AG04449 (cell line): ENCODE measurements at regions of chr1 and their contacts with region 1.

Region 1: DNA sequence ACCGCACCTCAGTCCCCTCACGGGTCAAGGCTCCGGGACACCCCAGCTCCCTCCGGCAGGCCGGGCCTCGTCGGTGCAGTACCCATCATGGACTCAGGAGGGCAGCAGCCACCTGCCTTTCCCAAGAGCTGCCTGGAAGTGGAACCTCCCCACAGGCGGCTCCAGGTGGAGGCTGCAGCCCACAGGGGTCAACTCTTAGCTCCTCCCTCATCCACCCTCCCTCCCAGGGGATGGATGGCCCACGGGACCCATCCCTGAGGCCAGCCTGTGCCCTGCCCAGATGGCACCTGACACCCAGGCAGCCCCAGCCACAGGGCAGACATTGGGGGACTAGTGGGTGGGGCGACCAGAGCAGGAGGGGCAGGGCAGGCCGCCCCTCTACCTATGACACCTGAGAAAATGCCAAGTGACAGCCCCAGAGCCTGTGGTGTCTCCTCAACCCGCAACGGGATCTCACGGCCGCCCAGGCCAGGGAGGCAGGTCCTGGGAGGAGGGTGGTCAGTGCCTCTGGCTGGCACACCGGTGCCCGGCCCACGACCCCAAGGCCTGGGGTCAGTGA is 1.2 kb upstream of the ARHGEF16 start:
- DNase-seq: no peak
- H3K4me3 ChIP-seq: no peak overlapping the region
- CTCF ChIP-seq: peak; percentile 98

Region 2: DNA sequence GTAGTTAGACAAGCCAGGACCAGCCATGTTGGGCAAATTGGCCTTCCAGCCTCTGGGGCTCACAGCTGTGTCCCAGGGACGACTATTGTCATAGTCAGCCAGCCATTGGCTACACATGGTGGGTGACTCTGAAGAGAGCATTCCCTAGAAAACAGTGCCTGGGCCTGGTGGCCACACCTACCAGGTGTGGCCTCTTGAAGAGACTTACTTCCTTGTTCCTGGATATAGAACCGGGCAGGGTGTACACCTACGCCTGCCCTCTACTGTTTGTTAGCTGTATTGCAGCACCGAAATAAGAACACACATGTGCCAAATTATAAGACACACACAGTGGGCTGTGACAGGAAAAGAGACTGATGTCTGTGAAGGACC is 133.4 kb before region 1 on chr1:
- CTCF ChIA-PET with region 1: no interaction called
- POLR2A ChIA-PET with region 1: no interaction called
- DNase-seq: no peak
- H3K4me3 ChIP-seq: no peak overlapping the region
- CTCF ChIP-seq: peak; percentile 57

Region 3: GRCh38 chr1:3471302-3472087 is 18.2 kb after region 1 on chr1:
- CTCF ChIA-PET with region 1: interaction called, 92 read pairs
- POLR2A ChIA-PET with region 1: no interaction called
- DNase-seq: no peak
- H3K4me3 ChIP-seq: no peak overlapping the region
- CTCF ChIP-seq: peak; percentile 69

Region 4: GRCh38 chr1:3491291-3492246 is 38.3 kb after region 1 on chr1:
- CTCF ChIA-PET with region 1: interaction called, 115 read pairs
- POLR2A ChIA-PET with region 1: no interaction called
- DNase-seq: no peak
- H3K4me3 ChIP-seq: no peak overlapping the region; the same call in 1 of the 2 replicates
- CTCF ChIP-seq: peak; percentile 91

Region 5: DNA sequence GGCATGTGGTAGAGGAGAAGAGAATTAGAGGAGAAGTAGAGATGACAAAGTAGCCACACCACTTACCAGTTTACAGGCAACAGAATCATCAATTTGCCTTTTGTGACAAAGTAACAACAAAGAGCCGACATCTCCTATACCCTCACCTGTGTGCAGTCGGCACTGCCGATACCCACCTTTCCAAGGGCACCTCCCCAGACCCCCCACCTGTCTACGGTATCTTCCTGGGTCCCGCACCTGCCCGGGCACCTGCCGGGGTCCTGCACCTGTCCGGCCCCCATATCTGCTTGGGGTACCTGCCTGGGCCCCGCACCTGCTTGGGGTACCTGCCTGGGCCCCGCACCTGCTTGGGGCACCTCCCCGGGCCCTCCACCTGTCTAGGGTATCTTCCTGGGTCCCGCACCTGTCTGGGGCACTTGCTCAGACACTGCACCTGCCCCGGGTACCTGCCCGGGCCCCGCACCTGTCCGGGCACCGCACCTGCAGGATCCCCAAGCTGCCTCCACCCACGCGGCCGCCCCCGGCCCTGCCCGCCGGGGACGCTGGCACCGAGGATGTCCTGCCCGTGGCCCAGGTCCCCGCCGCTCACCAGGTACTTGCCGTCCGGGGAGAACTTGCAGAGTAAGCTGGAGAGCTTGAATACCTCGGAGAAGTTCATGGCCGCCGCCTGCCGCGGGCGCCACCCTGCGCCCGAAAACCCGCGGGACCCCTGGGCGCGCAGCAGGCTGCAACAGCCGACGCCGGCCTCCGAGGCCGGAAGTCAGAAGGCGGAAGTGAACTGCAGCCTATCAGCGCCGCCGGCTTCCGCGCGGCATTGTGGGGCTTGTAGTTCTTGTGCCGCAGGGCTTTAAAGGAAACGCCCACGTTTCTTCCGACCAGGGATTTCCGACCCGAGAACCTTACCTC is 196.3 kb after region 1 on chr1 and contains the start of gene WRAP73:
- CTCF ChIA-PET with region 1: interaction called, 12 read pairs
- POLR2A ChIA-PET with region 1: no interaction called
- DNase-seq: peak; percentile 26
- H3K4me3 ChIP-seq: peak within 1 kb of the TSS; percentile 83
- CTCF ChIP-seq: peak; percentile 27